HAP-1 (cell line): ENCODE measurements at regions of chr6 and their contacts with region 1.

Region 1: DNA sequence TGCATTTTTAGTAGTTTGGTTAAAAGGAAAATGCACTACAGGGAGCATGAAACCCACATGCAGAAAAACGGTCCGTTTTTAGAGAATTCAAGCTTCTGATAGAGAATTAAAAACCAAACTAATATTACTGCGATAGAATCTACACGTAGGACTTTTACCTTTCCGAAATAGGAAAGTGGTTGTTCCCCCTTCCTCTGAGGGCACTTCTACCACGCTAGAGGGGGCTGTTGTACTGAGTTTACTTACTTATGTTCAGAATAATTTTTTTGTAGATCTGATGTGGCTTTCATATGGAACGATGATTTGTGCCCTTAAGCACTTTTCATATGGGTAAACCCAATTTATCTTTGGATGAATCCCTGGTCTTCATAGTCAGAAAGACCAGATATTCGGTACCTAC is 264.3 kb upstream of the PLN start:
- DNase-seq: peak; percentile 57 to 70
- H3K4me3 ChIP-seq: no peak overlapping the region
- H3K4me1 ChIP-seq: peaks cover 3% of the 10 kb centered on the region
- H3K27me3 ChIP-seq: no peaks in the 10 kb centered on the region

Region 2: GRCh38 chr6:117573006-117573680 is 710.6 kb before region 1 on chr6:
- in situ Hi-C with region 1: no loop called
- DNase-seq: peak; percentile 71 to 82
- H3K4me3 ChIP-seq: no peak overlapping the region
- H3K4me1 ChIP-seq: peaks cover 15% of the 10 kb centered on the region
- H3K27me3 ChIP-seq: no peaks in the 10 kb centered on the region

Region 3: GRCh38 chr6:118509009-118509617 is 225.3 kb after region 1 on chr6:
- in situ Hi-C with region 1: loop called (anchors 25 kb)
- DNase-seq: peak in 1 of 2 experiments; percentile 22
- H3K4me3 ChIP-seq: no peak overlapping the region
- H3K4me1 ChIP-seq: no peaks in the 10 kb centered on the region
- H3K27me3 ChIP-seq: no peaks in the 10 kb centered on the region

Region 4: DNA sequence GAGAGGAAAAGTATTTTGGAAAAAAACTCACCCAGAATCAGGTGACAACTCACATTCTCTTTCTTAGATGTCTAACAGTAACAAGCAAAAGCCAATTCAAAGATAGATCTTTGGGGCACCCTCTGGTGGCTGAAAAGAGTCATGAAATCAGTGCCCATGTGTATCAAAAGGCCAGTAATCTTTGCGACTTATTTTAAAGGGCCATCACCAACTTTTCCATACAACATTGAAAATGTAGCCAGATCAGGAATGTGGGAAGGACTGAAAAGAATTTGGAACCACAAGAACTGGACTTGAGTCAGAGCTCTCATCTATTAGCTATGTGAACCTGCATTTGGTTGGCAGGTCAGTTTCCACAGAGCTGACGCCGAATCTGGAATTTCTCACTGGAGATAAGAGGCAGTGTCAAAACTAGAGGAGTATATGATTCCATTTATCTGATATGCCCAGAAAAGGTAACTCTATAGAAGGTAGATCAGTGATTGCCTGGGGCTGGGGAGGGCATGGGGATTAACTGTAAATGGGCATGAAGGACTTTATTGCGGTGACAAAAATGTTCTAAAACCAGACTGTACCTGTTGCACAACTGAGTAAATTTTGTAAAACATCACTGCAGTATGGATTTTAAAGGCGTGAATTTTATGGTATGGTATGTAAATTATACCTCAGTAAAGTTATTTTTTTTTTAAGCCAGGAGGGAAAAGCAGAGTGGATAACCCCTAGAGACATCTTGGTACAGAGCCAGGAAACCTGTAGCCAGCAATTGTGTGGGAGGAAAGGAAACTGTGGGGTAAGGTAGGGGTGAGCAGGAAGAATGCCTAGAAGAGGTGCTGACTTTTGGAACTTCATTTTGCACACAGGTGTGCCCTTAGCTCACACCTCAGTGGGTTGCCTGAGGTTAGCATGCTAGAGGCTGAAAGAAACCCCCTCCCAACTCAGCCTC is 493.1 kb after region 1 on chr6:
- in situ Hi-C with region 1: loop called (anchors 25 kb)
- DNase-seq: peak; percentile 72 to 79
- H3K4me3 ChIP-seq: no peak overlapping the region
- H3K4me1 ChIP-seq: peaks cover 27% of the 10 kb centered on the region
- H3K27me3 ChIP-seq: no peaks in the 10 kb centered on the region